ENCODE measurements at regions of chr5 and their contacts with region 1.

Region 1: GRCh38 chr5:154610321-154611154 is 132.5 kb upstream of the HAND1 start:
- DNase-seq: peak; percentile 77 to 89
- H3K4me3 ChIP-seq: peak overlapping the region; percentile 19
- H3K4me1 ChIP-seq: peaks cover 2% of the 10 kb centered on the region; the same call in 1 of the 2 replicates
- H3K27me3 ChIP-seq: peaks cover 2% of the 10 kb centered on the region; the same call in 1 of the 2 replicates

Region 2: GRCh38 chr5:153974813-153975163 is 635.8 kb before region 1 on chr5:
- in situ Hi-C with region 1: loop called (anchors 25 kb)
- DNase-seq: no peak
- H3K4me3 ChIP-seq: no peak overlapping the region
- H3K4me1 ChIP-seq: no peaks in the 10 kb centered on the region
- H3K27me3 ChIP-seq: peaks cover 11% of the 10 kb centered on the region; the same call in 1 of the 2 replicates

Region 3: DNA sequence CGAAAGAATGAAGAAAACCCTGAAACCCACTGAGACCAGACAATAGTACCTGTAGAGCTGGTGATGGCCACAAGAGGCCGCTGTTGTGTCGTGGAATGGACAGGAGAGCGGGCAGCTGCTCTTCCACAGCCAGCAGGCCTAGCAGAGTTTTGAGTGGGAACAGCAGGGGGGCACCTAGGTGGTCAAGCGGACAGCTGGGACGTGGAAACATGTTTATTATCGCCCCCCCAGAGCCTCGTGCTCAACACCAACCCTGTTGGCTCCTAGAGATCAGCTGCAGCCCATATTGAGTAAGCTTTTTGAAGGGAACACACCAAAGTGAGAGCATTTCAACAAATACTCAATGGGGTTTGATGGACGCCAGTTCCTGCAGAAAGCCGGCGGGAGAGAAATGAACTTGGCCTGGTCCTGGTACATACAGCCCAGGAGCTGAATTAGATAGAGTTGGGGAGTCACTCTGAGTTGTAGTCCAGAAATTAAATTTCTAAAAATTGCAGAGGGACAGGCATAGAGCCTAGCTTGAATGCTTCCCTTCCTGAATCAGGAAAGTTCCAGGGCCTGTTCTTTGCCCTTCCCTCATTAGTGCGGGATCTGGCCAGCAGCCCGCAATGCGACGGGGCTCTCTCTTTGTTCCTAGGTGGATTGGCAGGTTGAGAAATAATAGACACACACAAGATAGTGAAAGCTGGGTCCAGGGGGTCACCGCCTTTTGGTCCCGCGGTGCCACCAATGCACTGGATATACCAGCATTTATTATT is 537.9 kb before region 1 on chr5:
- in situ Hi-C with region 1: loop called (anchors 25 kb)
- DNase-seq: peak; percentile 55 to 86
- H3K4me3 ChIP-seq: no peak overlapping the region
- H3K4me1 ChIP-seq: peaks cover under 1% of the 10 kb centered on the region; the same call in 1 of the 2 replicates
- H3K27me3 ChIP-seq: peaks cover 54% of the 10 kb centered on the region

Region 4: GRCh38 chr5:154467655-154468354 is 142.7 kb before region 1 on chr5:
- in situ Hi-C with region 1: loop called (anchors 5 kb)
- DNase-seq: peak; percentile 60 to 88
- H3K4me3 ChIP-seq: no peak overlapping the region
- H3K4me1 ChIP-seq: peaks cover 3% of the 10 kb centered on the region; the same call in 1 of the 2 replicates
- H3K27me3 ChIP-seq: peaks cover 32% of the 10 kb centered on the region